Heart left ventricle (tissue), 16 donors: ENCODE measurements at regions of chr10 and their contacts with region 1.

Region 1: GRCh38 chr10:69914398-69915214 is 112.9 kb downstream of the COL13A1 start:
- DNase-seq: peak; percentile 62 to 79 (median 69)
- ATAC-seq: peak; percentile 46 to 85 (median 78)
- H3K4me3 ChIP-seq: no peak overlapping the region
- H3K27ac ChIP-seq: no peak overlapping the region
- H3K4me1 ChIP-seq: peaks cover 0 to 28% (median 10%) of the 10 kb centered on the region in 12 donors
- H3K27me3 ChIP-seq: no peaks in the 10 kb centered on the region
- CTCF ChIP-seq: peak; percentile 87 to 96 (median 92)
- POLR2A ChIP-seq: no peak

Region 2: GRCh38 chr10:69549959-69550358 is 364.6 kb before region 1 on chr10:
- intact Hi-C with region 1: no loop called
- DNase-seq: no peak
- ATAC-seq: no peak
- H3K4me3 ChIP-seq: no peak overlapping the region
- H3K27ac ChIP-seq: no peak overlapping the region
- H3K4me1 ChIP-seq: no peaks in the 10 kb centered on the region
- H3K27me3 ChIP-seq: peaks cover 0 to 6% (median 0%) of the 10 kb centered on the region in 9 donors
- CTCF ChIP-seq: no peak
- POLR2A ChIP-seq: no peak

Region 3: GRCh38 chr10:69644658-69645295 is 269.8 kb before region 1 on chr10:
- intact Hi-C with region 1: loop called in 9 of 10 experiments (anchors 1 to 10 kb)
- DNase-seq: peak in 4 of 5 donors; percentile 32 to 56 (median 49)
- ATAC-seq: peak in 3 of 4 donors; percentile 51 to 72 (median 56)
- H3K4me3 ChIP-seq: no peak overlapping the region
- H3K27ac ChIP-seq: no peak overlapping the region
- H3K4me1 ChIP-seq: no peaks in the 10 kb centered on the region
- H3K27me3 ChIP-seq: peaks cover 0 to 17% (median 4%) of the 10 kb centered on the region in 9 donors
- CTCF ChIP-seq: peak; percentile 67 to 89 (median 78)
- POLR2A ChIP-seq: no peak

Region 4: DNA sequence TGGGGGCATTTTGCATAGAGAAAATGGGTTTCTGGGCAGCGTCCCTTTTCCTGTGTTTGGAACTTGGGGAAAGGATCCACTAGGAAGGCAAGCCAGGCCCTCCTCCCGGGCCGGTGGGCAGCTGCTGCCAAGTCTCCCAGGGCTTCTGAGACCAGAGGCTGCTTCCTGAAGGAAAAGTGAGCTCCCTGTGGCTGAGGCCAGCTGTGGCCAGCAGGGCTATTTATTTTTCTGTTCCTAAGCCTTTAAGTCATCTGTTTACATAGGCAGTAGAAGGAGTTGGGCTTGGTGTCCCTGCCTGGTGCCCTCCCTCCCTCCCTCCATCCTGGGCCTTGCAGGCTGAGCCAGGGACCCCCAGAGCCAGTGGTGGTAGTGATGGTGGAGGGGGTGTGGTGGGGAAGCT is 183.4 kb before region 1 on chr10:
- intact Hi-C with region 1: loop called in 1 of 10 experiments (anchors 10 kb)
- DNase-seq: peak in 1 of 5 donors; percentile 66
- ATAC-seq: peak in 3 of 4 donors; percentile 3 to 15 (median 14)
- H3K4me3 ChIP-seq: no peak overlapping the region
- H3K27ac ChIP-seq: peak overlapping the region in 10 of 12 donors; percentile 78 to 92 (median 83)
- H3K4me1 ChIP-seq: peaks cover 0 to 72% (median 44%) of the 10 kb centered on the region in 12 donors
- H3K27me3 ChIP-seq: no peaks in the 10 kb centered on the region
- CTCF ChIP-seq: no peak
- POLR2A ChIP-seq: no peak

Region 5: DNA sequence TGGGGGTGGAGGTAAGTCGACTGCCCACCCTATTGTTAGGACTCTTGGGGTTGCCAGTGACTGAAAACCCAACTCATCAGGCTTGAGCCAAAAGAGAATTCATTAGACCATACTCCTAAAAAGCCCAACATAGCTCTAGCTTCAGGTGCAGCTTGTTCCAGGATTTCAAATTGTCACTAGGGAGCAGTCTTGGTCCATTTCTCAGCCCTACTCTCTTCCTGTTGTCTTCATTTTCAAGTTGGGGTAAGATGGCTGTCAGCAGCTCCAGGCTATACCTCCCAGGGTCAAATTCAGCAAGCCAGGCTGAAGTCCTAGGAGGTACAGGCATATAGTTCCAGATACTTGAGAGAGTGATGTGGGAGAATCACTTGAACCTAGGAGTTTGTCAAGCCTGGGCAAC is 127.8 kb before region 1 on chr10:
- intact Hi-C with region 1: loop called in 3 of 10 experiments (anchors 5 to 10 kb)
- DNase-seq: no peak
- ATAC-seq: no peak
- H3K4me3 ChIP-seq: no peak overlapping the region
- H3K27ac ChIP-seq: no peak overlapping the region
- H3K4me1 ChIP-seq: no peaks in the 10 kb centered on the region
- H3K27me3 ChIP-seq: peaks cover 0 to 20% (median 0%) of the 10 kb centered on the region in 9 donors
- CTCF ChIP-seq: peak in 6 of 12 donors; percentile 7 to 34 (median 22)
- POLR2A ChIP-seq: no peak

Region 6: GRCh38 chr10:69807122-69807521 is 107.5 kb before region 1 on chr10:
- intact Hi-C with region 1: loop called in 8 of 10 experiments (anchors 5 kb)
- DNase-seq: no peak
- ATAC-seq: no peak
- H3K4me3 ChIP-seq: no peak overlapping the region
- H3K27ac ChIP-seq: no peak overlapping the region
- H3K4me1 ChIP-seq: peaks cover 0 to 13% (median 6%) of the 10 kb centered on the region in 12 donors
- H3K27me3 ChIP-seq: peaks cover 0 to 20% (median 4%) of the 10 kb centered on the region in 9 donors
- CTCF ChIP-seq: no peak
- POLR2A ChIP-seq: no peak

Region 7: GRCh38 chr10:69861251-69862240 is 53.1 kb before region 1 on chr10:
- intact Hi-C with region 1: no loop called
- DNase-seq: no peak
- ATAC-seq: peak in 3 of 4 donors; percentile 39 to 65 (median 39)
- H3K4me3 ChIP-seq: no peak overlapping the region
- H3K27ac ChIP-seq: no peak overlapping the region
- H3K4me1 ChIP-seq: peaks cover 0 to 16% (median 9%) of the 10 kb centered on the region in 12 donors
- H3K27me3 ChIP-seq: no peaks in the 10 kb centered on the region
- CTCF ChIP-seq: peak in 2 of 12 donors; percentile 16
- POLR2A ChIP-seq: no peak